Body of pancreas (tissue), 4 donors: ENCODE measurements at regions of chr18 and their contacts with region 1.

Region 1: DNA sequence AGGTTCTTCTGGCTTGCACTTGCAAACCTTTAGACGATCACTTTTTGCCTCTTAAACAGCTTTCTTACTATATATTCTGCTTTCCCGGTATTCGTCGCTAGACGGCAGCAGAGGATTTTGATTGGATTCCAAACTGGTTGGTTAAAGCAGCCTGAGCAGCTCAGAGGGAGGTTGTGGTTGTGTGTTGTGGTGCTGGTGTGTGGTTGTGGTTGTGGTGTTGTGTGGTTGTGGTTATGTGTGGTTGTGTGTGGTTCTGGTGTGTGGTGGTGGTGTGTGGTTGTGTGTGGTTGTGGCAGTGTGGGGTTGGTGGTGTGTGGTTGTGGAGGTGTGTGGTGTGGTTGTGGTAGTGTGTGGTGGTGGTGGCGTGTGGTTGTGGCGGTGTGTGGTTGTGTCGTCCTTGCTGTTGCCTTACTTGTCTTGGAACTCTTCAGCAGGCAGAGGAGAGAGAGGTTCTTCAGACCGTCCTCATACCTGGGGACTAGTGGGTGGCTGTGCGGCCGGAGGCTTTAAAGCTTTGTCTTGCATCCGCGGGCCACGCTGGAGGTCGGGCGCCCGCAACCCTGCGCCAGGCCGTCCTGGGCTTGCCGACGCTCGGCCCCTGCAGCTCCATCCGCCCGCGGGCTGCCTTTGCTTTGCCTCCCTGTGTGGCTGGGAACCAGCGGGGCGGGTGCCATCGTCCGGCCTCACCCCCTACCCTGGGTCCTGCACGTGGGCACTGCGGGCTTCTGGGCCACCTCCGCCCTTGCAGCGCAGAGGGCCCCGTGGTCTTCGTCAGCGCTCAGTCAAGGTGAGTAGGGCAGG is 190.8 kb downstream of the ARHGAP28 start:
- DNase-seq: peak; percentile 72 to 85 (median 82)
- ATAC-seq: peak; percentile 88
- H3K4me3 ChIP-seq: no peak overlapping the region
- H3K27ac ChIP-seq: no peak overlapping the region
- H3K4me1 ChIP-seq: peaks cover 9% of the 10 kb centered on the region
- H3K27me3 ChIP-seq: no peaks in the 10 kb centered on the region
- CTCF ChIP-seq: peak; percentile 55 to 99 (median 89)
- POLR2A ChIP-seq: no peak

Region 2: DNA sequence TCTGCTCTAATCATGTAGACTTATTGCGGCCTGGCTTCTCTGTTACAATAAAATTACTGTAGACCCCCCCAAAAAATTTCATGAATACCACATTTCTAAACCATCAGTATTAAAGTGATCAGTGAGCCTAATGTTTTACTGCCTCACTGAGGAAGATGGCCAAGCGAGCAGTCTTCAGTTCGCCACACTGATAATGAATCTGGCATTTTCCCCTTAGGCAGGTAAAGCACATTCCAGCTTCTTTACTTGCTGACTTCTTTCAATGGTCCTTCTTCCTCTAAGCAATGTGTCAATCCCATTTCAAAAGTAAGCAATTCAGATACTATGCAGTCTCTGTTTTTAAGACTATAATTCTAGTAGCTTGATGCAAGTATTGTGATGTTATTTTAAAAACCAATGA is 59.7 kb after region 1 on chr18:
- intact Hi-C with region 1: no loop called
- DNase-seq: no peak
- ATAC-seq: no peak
- H3K4me3 ChIP-seq: no peak overlapping the region
- H3K27ac ChIP-seq: no peak overlapping the region
- H3K4me1 ChIP-seq: peaks cover 8% of the 10 kb centered on the region
- H3K27me3 ChIP-seq: no peaks in the 10 kb centered on the region
- CTCF ChIP-seq: no peak
- POLR2A ChIP-seq: no peak

Region 3: DNA sequence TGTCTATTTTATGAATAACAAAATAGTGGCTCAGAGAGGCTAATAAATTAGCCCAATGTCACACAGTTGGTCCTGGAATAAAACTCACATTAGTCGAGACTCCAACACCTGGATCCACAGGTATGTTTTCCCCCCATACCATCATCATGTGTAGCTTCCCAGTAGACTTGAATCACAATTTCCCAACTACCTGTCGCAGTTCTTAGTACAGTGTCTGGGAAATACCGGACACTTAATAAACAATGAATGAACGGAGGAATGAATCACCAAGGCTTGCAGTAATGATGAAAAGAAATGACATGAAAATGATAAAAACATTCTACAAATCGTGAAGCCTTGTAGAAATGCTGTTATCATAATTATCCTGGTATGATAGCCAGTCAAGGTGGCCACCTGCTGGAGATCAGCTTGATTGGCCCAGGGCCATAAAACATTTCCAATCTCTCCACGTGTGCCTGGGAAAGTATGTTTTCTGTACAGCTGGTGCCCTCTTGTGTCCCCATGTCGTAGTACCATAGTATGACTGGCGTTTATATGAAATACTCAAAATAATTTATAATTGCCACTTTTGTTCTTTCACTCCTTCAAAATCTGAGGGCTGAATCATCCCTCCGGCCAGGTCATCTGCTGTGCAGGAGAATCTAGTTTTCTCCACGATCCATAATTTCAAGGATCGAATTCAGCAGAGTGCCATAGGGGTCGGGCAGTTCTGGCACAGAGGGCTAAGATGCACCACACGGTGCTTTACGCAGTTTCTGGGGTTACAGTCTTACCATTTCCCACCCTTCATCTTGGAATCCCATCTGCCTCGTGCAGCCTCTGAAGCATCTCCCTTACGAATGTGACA is 101.9 kb after region 1 on chr18:
- intact Hi-C with region 1: loop called (anchors 5 kb)
- DNase-seq: peak; percentile 83 to 89 (median 86)
- ATAC-seq: peak; percentile 93
- H3K4me3 ChIP-seq: no peak overlapping the region
- H3K27ac ChIP-seq: peak overlapping the region in 1 of 4 donors; percentile 61
- H3K4me1 ChIP-seq: peaks cover 13% of the 10 kb centered on the region
- H3K27me3 ChIP-seq: no peaks in the 10 kb centered on the region
- CTCF ChIP-seq: peak; percentile 52 to 95 (median 86)
- POLR2A ChIP-seq: no peak